ENCODE measurements at regions of chr15 and their contacts with region 1.

Region 1: GRCh38 chr15:83561661-83562060 is 92.3 kb upstream of the ADAMTSL3 start:
- DNase-seq: no peak
- CTCF ChIP-seq: no peak

Region 2: GRCh38 chr15:83158401-83158800 is 403.3 kb before region 1 on chr15:
- in situ Hi-C with region 1: no loop called
- DNase-seq: no peak
- CTCF ChIP-seq: no peak

Region 3: GRCh38 chr15:83225449-83225848 is 336.2 kb before region 1 on chr15:
- in situ Hi-C with region 1: no loop called
- DNase-seq: no peak
- CTCF ChIP-seq: no peak

Region 4: DNA sequence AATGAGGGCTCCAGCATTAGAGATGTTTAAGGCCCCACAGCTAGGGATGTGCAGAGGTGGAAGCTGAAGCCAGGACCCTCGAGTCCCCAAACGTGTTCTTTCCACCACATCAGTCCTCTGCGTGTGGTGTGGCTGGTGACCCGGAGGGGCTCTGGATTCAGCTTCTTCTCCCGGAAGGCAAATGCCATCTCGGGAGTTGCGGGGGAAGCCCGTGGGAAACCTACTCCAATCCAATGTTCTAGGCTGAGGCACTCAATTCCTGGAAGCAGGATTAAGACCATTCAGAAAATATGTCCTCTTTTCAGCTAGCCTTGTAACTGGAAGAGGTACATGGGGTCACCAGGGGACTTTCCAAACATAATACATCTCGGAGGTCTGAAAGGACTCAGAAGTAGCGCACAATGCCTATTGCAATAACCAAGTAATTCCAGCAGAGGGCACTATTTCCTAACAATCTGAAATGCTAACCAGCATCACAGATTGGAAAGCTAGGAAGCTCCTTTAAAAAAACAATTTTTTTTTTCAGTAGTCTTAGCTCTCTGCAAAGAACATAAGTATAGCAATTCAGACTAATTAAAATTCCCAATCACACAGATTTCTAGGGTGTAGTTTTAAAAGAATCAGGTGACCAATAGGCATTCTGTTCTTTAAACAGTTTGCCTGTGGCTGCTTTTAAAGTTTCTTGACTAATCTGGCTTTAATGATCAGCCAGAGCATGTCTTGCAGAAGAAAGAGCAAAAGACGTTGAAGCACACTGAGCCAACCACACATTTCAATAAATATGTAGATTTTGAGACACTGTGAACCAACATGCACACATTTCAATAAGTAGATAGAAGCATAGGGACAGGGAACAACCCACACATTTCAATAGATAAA is 313.3 kb before region 1 on chr15:
- in situ Hi-C with region 1: loop called (anchors 10 kb)
- DNase-seq: peak; percentile 36
- CTCF ChIP-seq: peak; percentile 81